Activated B cell treated with CpG ODN at 0.5 μM for 24 hours (primary cell): ENCODE measurements at regions of chr12 and their contacts with region 1.

Region 1: DNA sequence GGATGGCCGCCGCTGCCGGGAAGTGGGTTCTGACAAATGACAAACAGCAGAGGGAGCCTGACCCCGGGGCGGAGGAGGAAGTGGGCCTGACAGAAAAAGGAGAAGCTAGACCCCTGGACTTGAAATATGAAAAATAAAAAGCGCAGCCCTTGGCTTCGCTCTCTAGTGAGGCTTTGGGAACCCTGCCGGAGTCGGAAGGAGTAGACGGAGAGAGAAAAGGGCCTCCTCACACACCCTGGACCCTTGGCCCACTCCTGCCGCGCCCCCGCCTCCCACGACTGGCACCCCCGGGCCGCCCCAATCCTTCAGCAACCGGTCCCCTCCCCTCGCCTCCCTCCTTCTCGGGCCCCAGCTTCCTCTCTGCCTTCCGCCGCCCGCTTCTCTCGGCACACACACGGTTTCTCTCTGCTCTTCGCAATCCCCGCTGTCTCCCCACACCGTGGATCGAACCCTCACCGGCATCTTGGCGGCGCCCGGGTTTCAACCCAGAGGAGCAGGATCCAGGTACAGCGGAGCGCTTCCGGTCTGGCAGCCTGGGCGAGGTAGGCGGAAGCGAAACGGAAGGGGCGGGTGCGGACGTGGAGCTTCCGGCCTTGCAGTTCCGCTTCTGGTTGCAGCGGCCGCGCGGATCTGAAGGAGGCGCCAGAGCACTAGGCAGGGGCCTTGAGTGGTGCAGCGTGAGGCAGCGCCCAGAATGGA is at the start of gene ARPC3:
- DNase-seq: peak; percentile 92
- ATAC-seq: peak; percentile 92
- H3K4me3 Mint-ChIP-seq: peak within 1 kb of the TSS; percentile 100
- H3K27ac Mint-ChIP-seq: peak within 1 kb of the TSS; percentile 100
- H3K4me1 Mint-ChIP-seq: peaks cover 48% of the 10 kb centered on the region
- H3K27me3 Mint-ChIP-seq: no peaks in the 10 kb centered on the region
- CTCF ChIP-seq: no peak
- total RNA-seq, gene ARPC3: 435 and 459 TPM in 2 replicates

Region 2: DNA sequence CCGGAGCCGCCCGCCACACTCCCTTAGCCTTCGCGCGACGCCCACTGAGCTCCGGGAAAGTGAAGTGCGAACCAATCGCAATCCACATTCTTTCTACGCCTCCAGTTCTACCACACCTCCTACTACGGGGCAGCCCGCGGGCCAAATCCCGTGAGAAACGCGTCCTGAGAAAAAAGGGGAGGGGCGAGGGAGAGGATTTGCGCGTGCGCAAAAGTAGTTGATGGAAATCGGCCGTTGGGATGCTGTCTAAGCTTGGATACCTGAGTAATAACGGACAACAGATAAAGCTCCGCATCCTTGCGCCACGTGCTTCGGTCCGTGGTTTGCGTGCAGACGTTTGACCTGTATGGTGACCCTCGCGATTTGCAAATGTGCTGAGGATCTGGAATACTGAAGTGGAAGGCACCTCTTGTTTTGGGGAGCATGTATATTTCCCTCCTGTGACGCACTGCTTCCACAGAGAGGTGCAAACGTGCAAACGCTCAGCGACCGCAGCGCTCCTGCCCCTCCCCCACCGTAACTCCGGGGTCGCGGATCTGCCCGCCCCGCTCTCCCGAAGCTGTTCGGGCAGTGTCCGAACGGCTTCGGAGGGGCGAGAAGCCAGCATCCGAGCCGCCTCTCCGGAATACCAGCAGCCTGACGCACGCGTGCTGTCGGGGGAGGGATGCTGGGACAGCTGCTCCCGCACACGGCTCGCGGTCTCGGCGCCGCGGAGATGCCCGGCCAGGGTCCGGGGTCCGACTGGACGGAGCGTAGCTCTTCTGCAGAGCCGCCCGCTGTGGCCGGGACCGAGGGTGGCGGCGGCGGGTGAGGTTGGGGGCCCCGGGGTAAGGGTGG is 18.5 kb after region 1 on chr12 and contains the starts of genes FAM216A and GPN3:
- CTCF ChIA-PET with region 1: interaction called, 55 read pairs
- POLR2A ChIA-PET with region 1: interaction called, 106 read pairs
- intact Hi-C with region 1: loop called (anchors 1 kb)
- DNase-seq: peak; percentile 86
- ATAC-seq: peak; percentile 91
- H3K4me3 Mint-ChIP-seq: peak within 1 kb of the TSS; percentile 100
- H3K27ac Mint-ChIP-seq: peak within 1 kb of the TSS; percentile 96
- H3K4me1 Mint-ChIP-seq: peaks cover 41% of the 10 kb centered on the region
- H3K27me3 Mint-ChIP-seq: no peaks in the 10 kb centered on the region
- CTCF ChIP-seq: no peak
- total RNA-seq, gene FAM216A: 9.7 and 9.9 TPM in 2 replicates
- total RNA-seq, gene GPN3: 17.0 and 19.0 TPM in 2 replicates

Region 3: DNA sequence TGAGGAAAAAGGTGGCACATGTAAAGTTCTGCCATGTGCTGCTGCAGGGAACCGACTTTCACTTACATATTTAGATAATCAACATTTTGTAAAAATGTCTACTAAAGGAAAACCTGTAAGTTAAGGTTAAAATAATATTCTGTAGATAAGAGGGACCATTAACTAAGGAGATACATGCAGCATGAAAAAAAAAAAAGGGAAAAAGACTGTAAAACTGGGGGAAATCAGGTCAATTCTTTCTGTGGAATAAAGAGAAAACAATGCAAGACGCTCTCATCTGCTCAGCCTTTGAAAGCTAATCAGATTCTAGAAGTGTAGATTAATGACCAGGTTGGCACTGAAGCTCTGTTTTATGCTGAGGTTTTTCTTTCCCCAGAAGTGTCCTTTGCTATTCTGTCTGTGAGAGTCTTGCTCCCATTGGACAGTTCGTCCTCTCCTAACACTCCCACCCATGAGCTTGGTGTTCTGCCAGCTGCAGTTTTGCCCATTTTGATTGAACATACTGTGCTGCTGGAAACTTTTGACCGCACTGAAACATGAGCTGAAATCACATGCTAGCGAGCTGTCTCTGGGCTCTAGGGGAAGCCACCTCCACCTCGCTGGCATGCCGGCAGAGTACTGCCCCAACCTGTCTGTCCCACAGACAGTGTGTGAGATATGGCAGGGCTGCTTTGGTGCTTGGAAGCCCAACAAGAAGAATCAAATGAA is 93.5 kb after region 1 on chr12:
- CTCF ChIA-PET with region 1: interaction called, 10 read pairs
- POLR2A ChIA-PET with region 1: interaction called, 9 read pairs
- intact Hi-C with region 1: no loop called
- DNase-seq: no peak
- ATAC-seq: peak; percentile 42
- H3K4me3 Mint-ChIP-seq: peak overlapping the region; percentile 9
- H3K27ac Mint-ChIP-seq: peak overlapping the region; percentile 72
- H3K4me1 Mint-ChIP-seq: peaks cover 39% of the 10 kb centered on the region
- H3K27me3 Mint-ChIP-seq: no peaks in the 10 kb centered on the region
- CTCF ChIP-seq: no peak

Region 4: GRCh38 chr12:110583137-110584059 is 133.4 kb after region 1 on chr12 and contains the start of gene PPTC7:
- CTCF ChIA-PET with region 1: interaction called, 4 read pairs
- POLR2A ChIA-PET with region 1: interaction called, 10 read pairs
- intact Hi-C with region 1: no loop called
- DNase-seq: peak; percentile 85
- ATAC-seq: peak; percentile 93
- H3K4me3 Mint-ChIP-seq: peak within 1 kb of the TSS; percentile 90
- H3K27ac Mint-ChIP-seq: peak within 1 kb of the TSS; percentile 87
- H3K4me1 Mint-ChIP-seq: peaks cover 70% of the 10 kb centered on the region
- H3K27me3 Mint-ChIP-seq: no peaks in the 10 kb centered on the region
- CTCF ChIP-seq: no peak
- total RNA-seq, gene PPTC7: 34.5 and 40.8 TPM in 2 replicates

Region 5: DNA sequence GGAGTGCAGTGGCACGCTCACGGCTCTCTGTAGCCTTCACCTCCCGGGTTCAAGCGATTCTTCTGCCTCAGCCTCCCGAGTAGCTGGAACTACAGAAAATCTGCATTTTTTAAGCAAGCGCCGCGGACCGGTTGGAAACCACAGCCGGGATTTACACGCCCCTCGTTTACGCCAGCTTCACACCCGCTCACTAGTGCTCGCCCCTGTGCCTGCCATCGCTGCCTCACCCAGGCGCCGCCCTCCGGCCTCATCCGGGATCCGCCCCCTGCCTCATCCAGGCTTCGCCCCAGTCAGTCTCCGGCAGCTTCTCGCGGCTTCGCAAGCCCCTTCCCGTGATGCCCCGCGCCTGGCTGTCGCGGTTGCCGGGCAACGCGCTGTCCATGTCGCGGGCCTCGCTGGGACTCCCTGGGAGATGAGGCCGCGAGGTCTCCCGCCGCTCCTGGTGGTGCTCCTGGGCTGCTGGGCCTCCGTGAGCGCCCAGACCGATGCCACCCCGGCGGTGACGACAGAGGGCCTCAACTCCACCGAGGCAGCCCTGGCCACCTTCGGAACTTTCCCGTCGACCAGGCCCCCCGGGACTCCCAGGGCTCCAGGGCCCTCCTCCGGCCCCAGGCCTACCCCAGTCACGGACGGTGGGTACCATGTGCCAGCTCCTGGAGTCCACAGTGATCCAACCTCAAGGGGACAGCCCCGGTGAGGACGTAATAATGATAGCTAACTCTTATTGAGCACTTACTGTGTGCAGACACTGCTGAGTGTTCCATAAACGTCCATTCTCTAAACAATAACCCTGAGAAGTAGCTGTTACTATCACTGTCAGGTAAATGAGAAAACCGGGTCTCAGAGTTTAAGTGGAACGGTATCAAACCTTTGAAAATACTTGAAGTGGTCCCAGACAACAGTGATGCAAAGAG is 164.1 kb after region 1 on chr12 and contains the start of gene TCTN1:
- CTCF ChIA-PET with region 1: interaction called, 3 read pairs
- POLR2A ChIA-PET with region 1: interaction called, 11 read pairs
- intact Hi-C with region 1: no loop called
- DNase-seq: peak; percentile 95
- ATAC-seq: peak; percentile 98
- H3K4me3 Mint-ChIP-seq: peak within 1 kb of the TSS; percentile 89
- H3K27ac Mint-ChIP-seq: peak within 1 kb of the TSS; percentile 94
- H3K4me1 Mint-ChIP-seq: peaks cover 57% of the 10 kb centered on the region
- H3K27me3 Mint-ChIP-seq: no peaks in the 10 kb centered on the region
- CTCF ChIP-seq: no peak
- total RNA-seq, gene TCTN1: 22.4 and 29.5 TPM in 2 replicates

Region 6: GRCh38 chr12:110846615-110847566 is 396.9 kb after region 1 on chr12 and contains the start of gene CCDC63:
- CTCF ChIA-PET with region 1: no interaction called
- POLR2A ChIA-PET with region 1: interaction called, 7 read pairs
- intact Hi-C with region 1: loop called (anchors 5 kb)
- DNase-seq: peak; percentile 45
- ATAC-seq: peak; percentile 81
- H3K4me3 Mint-ChIP-seq: peak within 1 kb of the TSS; percentile 87
- H3K27ac Mint-ChIP-seq: no peak within 1 kb of the TSS
- H3K4me1 Mint-ChIP-seq: peaks cover 8% of the 10 kb centered on the region
- H3K27me3 Mint-ChIP-seq: peaks cover 17% of the 10 kb centered on the region
- CTCF ChIP-seq: no peak
- total RNA-seq, gene CCDC63: not detected in 2 replicates

Region 7: DNA sequence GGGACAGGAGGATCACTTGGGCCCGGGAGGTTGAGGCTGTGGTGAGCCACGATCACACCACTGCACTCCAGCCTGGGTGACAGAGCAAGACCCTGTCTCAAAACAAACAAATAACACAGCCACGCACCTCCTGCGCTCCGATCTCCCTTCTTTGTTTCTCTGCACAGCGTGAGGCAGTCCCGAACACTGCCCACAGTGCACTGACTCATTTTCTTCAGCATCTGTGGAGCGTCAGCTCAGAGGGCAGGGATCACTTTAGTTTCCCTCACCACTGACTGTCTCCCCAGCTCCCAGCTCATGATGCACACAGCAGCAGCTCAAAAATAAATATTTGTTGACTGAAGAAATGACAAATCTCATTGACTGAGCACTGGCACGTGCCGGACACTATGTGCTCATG is 471.3 kb after region 1 on chr12:
- CTCF ChIA-PET with region 1: no interaction called
- POLR2A ChIA-PET with region 1: no interaction called
- intact Hi-C with region 1: no loop called
- DNase-seq: no peak
- ATAC-seq: no peak
- H3K4me3 Mint-ChIP-seq: no peak overlapping the region
- H3K27ac Mint-ChIP-seq: no peak overlapping the region
- H3K4me1 Mint-ChIP-seq: no peaks in the 10 kb centered on the region
- H3K27me3 Mint-ChIP-seq: peaks cover 7% of the 10 kb centered on the region
- CTCF ChIP-seq: no peak

Region 8: GRCh38 chr12:112230136-112230535 is 1780.2 kb after region 1 on chr12:
- CTCF ChIA-PET with region 1: no interaction called
- POLR2A ChIA-PET with region 1: no interaction called
- intact Hi-C with region 1: no loop called
- DNase-seq: no peak
- ATAC-seq: no peak
- H3K4me3 Mint-ChIP-seq: no peak overlapping the region
- H3K27ac Mint-ChIP-seq: no peak overlapping the region
- H3K4me1 Mint-ChIP-seq: no peaks in the 10 kb centered on the region
- H3K27me3 Mint-ChIP-seq: no peaks in the 10 kb centered on the region
- CTCF ChIP-seq: no peak